ENCODE measurements at regions of chr3 and their contacts with region 1.

Region 1: DNA sequence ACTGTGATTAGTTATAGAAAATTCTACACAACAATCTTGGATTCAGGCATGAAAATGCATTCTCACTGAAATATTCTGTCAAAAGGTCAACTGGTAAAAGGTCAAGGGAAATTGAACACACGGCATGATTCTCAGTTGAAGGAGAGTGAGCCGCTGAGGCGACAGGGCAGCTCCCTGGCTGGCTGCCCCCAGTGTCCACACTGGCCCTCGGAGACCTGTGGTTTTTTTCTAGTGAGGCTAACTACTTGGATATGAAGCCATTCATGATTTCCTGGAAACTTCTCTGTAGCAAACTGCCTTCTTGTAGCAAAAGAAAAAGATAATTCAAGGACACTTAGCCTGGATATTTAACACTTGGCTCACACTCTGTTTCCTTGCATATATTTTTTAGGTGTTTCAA is 37.2 kb downstream of the AADACL2 start:
- DNase-seq: peak; percentile 79
- H3K4me3 ChIP-seq: peak overlapping the region in 1 of 3 experiments; percentile 16
- H3K27ac ChIP-seq: peak overlapping the region; percentile 80
- H3K4me1 ChIP-seq: peaks cover 53% of the 10 kb centered on the region
- H3K27me3 ChIP-seq: no peaks in the 10 kb centered on the region
- CTCF ChIP-seq: no peak
- POLR2A ChIP-seq: no peak

Region 2: DNA sequence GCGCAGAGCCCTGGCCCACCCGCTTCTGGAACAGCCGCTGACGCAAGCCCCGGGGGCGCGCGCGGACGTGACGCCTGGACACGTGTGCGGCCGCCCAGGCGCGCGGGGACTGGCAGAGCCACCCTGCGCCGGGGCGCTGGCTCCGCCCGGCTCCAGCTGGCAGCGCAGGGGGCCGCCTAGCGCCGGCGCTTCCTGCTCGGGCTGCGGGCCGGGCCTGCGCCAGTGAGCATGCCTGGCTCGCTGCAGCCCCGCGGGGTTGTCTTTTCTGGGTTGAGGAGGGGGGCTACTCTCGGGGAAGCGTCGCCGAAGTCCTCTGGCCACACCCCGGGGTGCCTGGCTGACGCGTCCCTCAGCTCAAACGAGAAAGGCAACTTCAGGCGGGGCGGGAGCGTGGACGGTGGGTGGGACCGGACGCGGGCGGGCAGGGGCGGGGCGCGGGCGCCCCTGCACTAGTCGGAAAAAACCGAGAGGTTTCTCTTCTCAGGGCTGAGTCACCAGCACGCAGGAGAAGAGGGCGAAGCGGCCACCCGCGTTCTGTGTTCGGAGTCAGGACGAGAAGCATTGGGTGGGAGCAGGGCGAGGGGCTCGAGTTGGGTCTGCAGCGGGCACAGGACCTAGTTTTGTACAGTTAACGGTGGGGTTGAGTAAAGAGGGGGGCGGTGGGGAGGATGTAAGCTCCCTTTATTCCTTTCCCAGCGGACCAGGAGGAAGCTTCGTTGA is 1007.7 kb before region 1 on chr3 and contains the start of gene SIAH2:
- CTCF ChIA-PET with region 1: no interaction called
- POLR2A ChIA-PET with region 1: no interaction called
- dilution Hi-C with region 1: no loop called
- intact Hi-C with region 1: loop called (anchors 5 kb)
- DNase-seq: peak; percentile 94
- H3K4me3 ChIP-seq: peak within 1 kb of the TSS; percentile 43 to 85 (median 64)
- H3K27ac ChIP-seq: peak within 1 kb of the TSS; percentile 86
- H3K4me1 ChIP-seq: peaks cover 19% of the 10 kb centered on the region
- H3K27me3 ChIP-seq: no peaks in the 10 kb centered on the region
- CTCF ChIP-seq: no peak
- POLR2A ChIP-seq: peak; percentile 92
- total RNA-seq, gene SIAH2: 16.0 and 16.7 TPM in 2 replicates

Region 3: GRCh38 chr3:151792411-151792810 is 21.5 kb after region 1 on chr3:
- CTCF ChIA-PET with region 1: interaction called, 3 read pairs
- POLR2A ChIA-PET with region 1: no interaction called
- dilution Hi-C with region 1: no loop called
- intact Hi-C with region 1: loop called (anchors 2 kb)
- DNase-seq: no peak
- H3K4me3 ChIP-seq: no peak overlapping the region
- H3K27ac ChIP-seq: no peak overlapping the region
- H3K4me1 ChIP-seq: peaks cover 10% of the 10 kb centered on the region
- H3K27me3 ChIP-seq: no peaks in the 10 kb centered on the region
- CTCF ChIP-seq: no peak
- POLR2A ChIP-seq: no peak

Region 4: DNA sequence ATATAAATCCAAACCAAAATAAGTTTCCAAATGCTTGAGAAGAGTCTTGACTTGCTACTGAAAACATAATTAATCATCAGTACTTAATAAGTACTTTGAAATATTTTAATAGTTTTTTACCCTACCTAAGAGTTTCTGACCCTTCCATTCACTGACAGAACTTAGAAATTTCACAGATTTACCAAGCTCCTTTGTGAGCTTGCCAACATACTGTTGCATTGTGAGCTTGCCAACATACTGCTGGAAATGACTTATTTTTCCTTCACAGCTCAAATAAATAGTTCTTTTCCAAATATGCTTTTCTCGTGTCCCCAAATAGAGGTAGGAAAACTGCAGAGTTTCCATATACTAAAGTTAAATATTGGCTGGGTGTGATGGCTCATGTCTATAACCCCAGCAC is 33.3 kb after region 1 on chr3:
- CTCF ChIA-PET with region 1: no interaction called
- POLR2A ChIA-PET with region 1: no interaction called
- dilution Hi-C with region 1: no loop called
- intact Hi-C with region 1: no loop called
- DNase-seq: no peak
- H3K4me3 ChIP-seq: no peak overlapping the region
- H3K27ac ChIP-seq: no peak overlapping the region
- H3K4me1 ChIP-seq: no peaks in the 10 kb centered on the region
- H3K27me3 ChIP-seq: no peaks in the 10 kb centered on the region
- CTCF ChIP-seq: no peak
- POLR2A ChIP-seq: no peak

Region 5: DNA sequence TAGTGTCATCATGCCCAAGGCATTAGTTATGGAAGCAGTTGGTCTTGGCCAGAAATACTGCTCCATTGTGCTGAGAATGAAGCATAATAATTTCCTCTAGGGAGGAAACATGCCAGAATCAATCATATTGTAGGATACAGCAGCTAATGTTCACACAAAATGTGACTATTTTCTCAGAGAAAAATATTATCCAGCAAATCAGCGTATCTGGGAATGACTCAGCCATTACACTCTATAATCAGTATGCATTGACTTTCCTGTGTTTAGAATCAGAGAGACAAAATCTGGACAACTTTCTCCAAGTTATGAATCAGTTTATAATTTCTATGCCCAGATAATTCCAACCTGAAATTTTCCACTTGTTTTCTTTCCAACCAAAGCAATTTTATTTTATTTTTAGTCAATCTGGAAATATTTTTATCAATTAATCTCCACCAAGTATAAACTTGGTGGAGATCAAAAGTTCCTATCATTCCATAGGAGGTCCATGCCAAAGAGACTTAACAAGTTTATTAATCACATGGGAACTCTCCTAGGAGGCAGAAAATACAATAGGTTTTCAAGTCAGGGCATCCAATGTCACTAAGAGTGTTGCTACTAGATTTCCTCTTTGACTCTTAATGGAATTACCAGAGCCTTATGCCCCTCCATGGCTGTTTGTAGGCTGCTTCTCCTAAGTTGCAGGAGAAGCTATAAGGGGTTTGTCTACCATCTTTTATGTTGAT is 138.9 kb after region 1 on chr3:
- CTCF ChIA-PET with region 1: no interaction called
- POLR2A ChIA-PET with region 1: no interaction called
- dilution Hi-C with region 1: no loop called
- intact Hi-C with region 1: loop called (anchors 2 kb)
- DNase-seq: peak; percentile 91
- H3K4me3 ChIP-seq: no peak overlapping the region
- H3K27ac ChIP-seq: peak overlapping the region; percentile 71
- H3K4me1 ChIP-seq: peaks cover 21% of the 10 kb centered on the region
- H3K27me3 ChIP-seq: no peaks in the 10 kb centered on the region
- CTCF ChIP-seq: no peak
- POLR2A ChIP-seq: no peak

Region 6: DNA sequence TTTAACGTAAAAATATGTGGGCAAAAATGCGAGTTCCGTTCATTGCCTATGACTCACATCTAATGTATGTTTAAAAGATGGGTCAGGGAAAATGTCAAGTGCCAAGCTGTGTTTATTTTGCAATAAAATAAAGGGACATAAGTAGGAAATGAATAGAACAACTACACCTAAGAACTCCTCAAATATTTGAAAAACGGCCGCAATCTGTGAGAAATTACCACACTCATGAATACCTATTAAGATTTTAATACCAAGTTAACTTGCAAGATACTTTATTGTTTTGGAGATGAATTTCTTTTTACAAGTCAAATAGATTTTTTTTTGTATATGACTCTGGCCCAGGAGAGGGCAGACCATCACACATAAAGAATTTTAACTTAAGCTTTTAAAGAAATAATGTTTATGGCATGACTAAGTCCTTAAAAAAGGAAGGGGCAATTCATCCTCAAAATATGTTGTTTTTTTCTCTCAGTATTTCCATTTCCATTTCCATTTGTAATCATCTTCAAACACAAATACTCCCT is 255.1 kb after region 1 on chr3:
- CTCF ChIA-PET with region 1: no interaction called
- POLR2A ChIA-PET with region 1: no interaction called
- dilution Hi-C with region 1: no loop called
- intact Hi-C with region 1: loop called (anchors 1 kb)
- DNase-seq: peak; percentile 95
- H3K4me3 ChIP-seq: peak overlapping the region in 1 of 3 experiments; percentile 41
- H3K27ac ChIP-seq: peak overlapping the region; percentile 89
- H3K4me1 ChIP-seq: peaks cover 41% of the 10 kb centered on the region
- H3K27me3 ChIP-seq: no peaks in the 10 kb centered on the region
- CTCF ChIP-seq: peak; percentile 16 to 19
- POLR2A ChIP-seq: peak; percentile 45

Region 7: GRCh38 chr3:152196782-152197181 is 425.8 kb after region 1 on chr3:
- CTCF ChIA-PET with region 1: no interaction called
- POLR2A ChIA-PET with region 1: no interaction called
- dilution Hi-C with region 1: no loop called
- intact Hi-C with region 1: no loop called
- DNase-seq: no peak
- H3K4me3 ChIP-seq: no peak overlapping the region
- H3K27ac ChIP-seq: no peak overlapping the region
- H3K4me1 ChIP-seq: peaks cover 11% of the 10 kb centered on the region
- H3K27me3 ChIP-seq: no peaks in the 10 kb centered on the region
- CTCF ChIP-seq: no peak
- POLR2A ChIP-seq: no peak

Region 8: GRCh38 chr3:152328841-152329240 is 557.9 kb after region 1 on chr3:
- CTCF ChIA-PET with region 1: no interaction called
- POLR2A ChIA-PET with region 1: no interaction called
- dilution Hi-C with region 1: no loop called
- intact Hi-C with region 1: loop called (anchors 5 kb)
- DNase-seq: peak; percentile 95
- H3K4me3 ChIP-seq: peak overlapping the region in 1 of 3 experiments; percentile 43
- H3K27ac ChIP-seq: peak overlapping the region; percentile 93
- H3K4me1 ChIP-seq: peaks cover 83% of the 10 kb centered on the region
- H3K27me3 ChIP-seq: no peaks in the 10 kb centered on the region
- CTCF ChIP-seq: no peak
- POLR2A ChIP-seq: peak; percentile 49